SK-N-SH (cell line): ENCODE measurements at regions of chr10 and their contacts with region 1.

Region 1: DNA sequence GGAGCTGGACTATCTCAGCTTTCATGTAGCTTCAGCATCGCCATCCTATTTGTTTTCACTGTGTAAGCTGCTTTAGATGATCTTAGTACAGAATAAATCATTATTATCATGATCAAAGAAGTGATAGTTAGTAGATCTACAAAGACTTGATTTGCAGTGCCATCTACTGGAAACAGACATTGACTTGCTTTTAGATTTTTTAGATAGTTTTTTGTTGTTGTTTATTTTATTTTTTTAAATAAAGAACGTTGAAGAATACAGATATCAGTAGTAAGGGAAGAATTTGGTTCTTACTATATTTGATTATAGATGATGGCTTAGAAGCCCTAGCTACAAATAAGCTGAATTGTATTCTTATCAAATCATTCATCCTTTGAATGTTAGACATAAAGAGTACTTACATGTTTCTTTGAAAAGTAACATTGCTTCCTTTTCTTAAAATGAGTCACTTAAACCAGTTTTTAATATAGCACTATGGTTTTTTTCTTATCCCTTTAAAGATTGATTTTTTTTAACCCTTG is 6.3 kb upstream of the SFMBT2 start:
- DNase-seq: no peak
- H3K4me3 ChIP-seq: no peak overlapping the region
- H3K27ac ChIP-seq: no peak overlapping the region
- H3K4me1 ChIP-seq: no peaks in the 10 kb centered on the region
- H3K27me3 ChIP-seq: peaks cover 8% of the 10 kb centered on the region
- CTCF ChIP-seq: peak; percentile 72
- EP300 ChIP-seq: no peak
- RAD21 ChIP-seq: peak; percentile 81

Region 2: GRCh38 chr10:6786579-6787031 is 630.6 kb before region 1 on chr10:
- CTCF ChIA-PET with region 1: interaction called, 13 read pairs
- POLR2A ChIA-PET with region 1: no interaction called
- DNase-seq: peak; percentile 20
- H3K4me3 ChIP-seq: peak overlapping the region in 1 of 2 experiments; percentile 14; a peak in 2 of 4 replicates
- H3K27ac ChIP-seq: no peak overlapping the region
- H3K4me1 ChIP-seq: no peaks in the 10 kb centered on the region; a peak in 2 of 4 replicates
- H3K27me3 ChIP-seq: no peaks in the 10 kb centered on the region
- CTCF ChIP-seq: peak; percentile 70
- EP300 ChIP-seq: no peak
- RAD21 ChIP-seq: peak; percentile 60

Region 3: GRCh38 chr10:6920072-6921019 is 496.8 kb before region 1 on chr10:
- CTCF ChIA-PET with region 1: interaction called, 19 read pairs
- POLR2A ChIA-PET with region 1: no interaction called
- DNase-seq: peak; percentile 71
- H3K4me3 ChIP-seq: peak overlapping the region in 1 of 2 experiments; percentile 42; a peak in 2 of 4 replicates
- H3K27ac ChIP-seq: no peak overlapping the region
- H3K4me1 ChIP-seq: peaks cover 2 to 3% of the 10 kb centered on the region in 2 experiments; a peak in 1 of 4 replicates
- H3K27me3 ChIP-seq: no peaks in the 10 kb centered on the region
- CTCF ChIP-seq: peak; percentile 69
- EP300 ChIP-seq: no peak
- RAD21 ChIP-seq: peak; percentile 82